ENCODE measurements at regions of chr20 and their contacts with region 1.

Region 1: DNA sequence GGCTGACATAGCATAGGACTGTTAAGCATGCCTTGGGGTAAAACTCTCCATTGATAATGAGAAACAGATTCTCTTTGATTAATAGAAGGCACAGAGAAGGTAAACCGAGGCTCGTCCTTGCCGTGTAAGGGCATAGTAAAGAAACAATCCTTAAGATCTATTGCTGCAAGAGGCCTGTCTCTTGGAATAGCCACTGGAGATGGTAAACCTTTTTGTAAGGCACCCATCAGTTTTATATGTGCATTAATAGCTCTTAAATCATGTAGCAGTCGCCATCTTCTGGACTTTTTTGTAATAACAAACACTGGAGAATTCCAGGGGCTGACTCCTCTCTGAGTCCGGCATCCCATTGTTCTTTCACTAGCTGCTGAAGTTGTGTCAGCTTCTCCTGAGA is 8.4 kb upstream of the ABHD12 start:
- DNase-seq: peak; percentile 53

Region 2: GRCh38 chr20:25294459-25295385 is 104.3 kb before region 1 on chr20:
- CTCF ChIA-PET with region 1: interaction called, 23 read pairs
- POLR2A ChIA-PET with region 1: interaction called, 5 read pairs
- DNase-seq: peak; percentile 84

Region 3: DNA sequence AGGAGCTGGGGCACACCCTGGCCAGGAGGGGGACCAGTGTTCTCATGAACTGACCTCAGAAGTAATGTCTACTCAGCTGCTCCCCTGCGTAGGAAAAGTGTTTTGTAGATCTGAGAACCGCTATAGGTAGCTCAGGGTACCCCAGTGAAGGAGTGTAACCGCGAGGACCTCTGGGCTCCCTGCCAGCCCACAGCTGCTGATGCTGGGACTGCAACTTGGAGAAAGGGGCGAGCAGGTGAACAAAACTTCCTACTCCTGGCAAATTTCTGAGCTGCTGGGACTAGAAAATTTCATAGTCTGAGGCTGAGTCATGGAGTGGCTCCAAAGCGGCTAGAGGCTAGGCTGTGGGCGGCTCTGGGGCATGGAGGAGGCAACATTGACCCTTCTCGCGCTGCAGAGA is 99.2 kb before region 1 on chr20:
- CTCF ChIA-PET with region 1: interaction called, 23 read pairs
- POLR2A ChIA-PET with region 1: no interaction called
- DNase-seq: no peak

Region 4: GRCh38 chr20:25336561-25337422 is 62.2 kb before region 1 on chr20:
- CTCF ChIA-PET with region 1: interaction called, 14 read pairs
- POLR2A ChIA-PET with region 1: interaction called, 3 read pairs
- DNase-seq: no peak

Region 5: GRCh38 chr20:25453035-25453810 is 54.2 kb after region 1 on chr20:
- CTCF ChIA-PET with region 1: no interaction called
- POLR2A ChIA-PET with region 1: no interaction called
- DNase-seq: peak; percentile 63

Region 6: DNA sequence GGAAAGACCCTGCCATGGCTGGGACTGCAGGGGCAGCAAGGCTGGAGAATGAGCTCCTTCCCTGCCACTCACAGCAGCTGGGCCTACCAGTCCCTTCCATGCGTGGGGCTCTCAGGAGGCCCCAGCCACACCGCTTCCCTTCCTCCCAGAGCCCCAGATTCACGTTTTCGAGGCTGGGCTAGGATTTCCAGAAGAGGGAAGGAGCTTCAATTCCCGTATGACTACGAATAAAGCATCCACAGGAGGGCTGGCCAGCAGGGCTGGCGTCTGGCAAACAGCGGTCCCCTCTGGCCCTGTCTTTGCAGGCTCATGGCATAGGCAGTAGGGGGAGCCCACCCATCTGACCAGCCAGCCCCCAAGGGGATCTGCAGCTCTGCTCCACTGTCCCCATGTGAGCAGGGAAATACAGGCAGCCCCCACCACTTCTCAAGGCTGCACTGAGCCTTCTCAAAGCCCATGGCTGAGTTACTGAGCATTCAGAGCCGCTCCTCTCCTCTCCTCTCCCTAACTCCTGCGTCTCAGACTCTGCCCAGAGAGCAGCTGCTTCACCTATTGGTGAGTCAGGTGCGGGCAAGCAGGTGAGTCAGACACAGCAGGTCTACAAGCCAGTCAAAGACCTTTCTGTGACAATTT is 133.2 kb after region 1 on chr20:
- CTCF ChIA-PET with region 1: no interaction called
- POLR2A ChIA-PET with region 1: no interaction called
- DNase-seq: no peak

Region 7: GRCh38 chr20:25553819-25554296 is 154.8 kb after region 1 on chr20:
- CTCF ChIA-PET with region 1: no interaction called
- POLR2A ChIA-PET with region 1: no interaction called
- DNase-seq: no peak

Measured in HEK293T (cell line).